ENCODE measurements at regions of chr18 and their contacts with region 1.

Region 1: GRCh38 chr18:24726727-24727492 is 266.5 kb downstream of the HRH4 start:
- DNase-seq: peak; percentile 51
- H3K4me3 ChIP-seq: no peak overlapping the region
- H3K27ac ChIP-seq: no peak overlapping the region
- H3K4me1 ChIP-seq: no peaks in the 10 kb centered on the region
- H3K27me3 ChIP-seq: no peaks in the 10 kb centered on the region
- CTCF ChIP-seq: peak; percentile 55 to 82 (median 72)
- POLR2A ChIP-seq: no peak

Region 2: GRCh38 chr18:24488824-24489493 is 238.0 kb before region 1 on chr18:
- intact Hi-C with region 1: loop called (anchors 10 kb)
- DNase-seq: no peak
- H3K4me3 ChIP-seq: no peak overlapping the region
- H3K27ac ChIP-seq: no peak overlapping the region
- H3K4me1 ChIP-seq: no peaks in the 10 kb centered on the region
- H3K27me3 ChIP-seq: no peaks in the 10 kb centered on the region
- CTCF ChIP-seq: peak; percentile 56 to 85 (median 79)
- POLR2A ChIP-seq: no peak

Region 3: DNA sequence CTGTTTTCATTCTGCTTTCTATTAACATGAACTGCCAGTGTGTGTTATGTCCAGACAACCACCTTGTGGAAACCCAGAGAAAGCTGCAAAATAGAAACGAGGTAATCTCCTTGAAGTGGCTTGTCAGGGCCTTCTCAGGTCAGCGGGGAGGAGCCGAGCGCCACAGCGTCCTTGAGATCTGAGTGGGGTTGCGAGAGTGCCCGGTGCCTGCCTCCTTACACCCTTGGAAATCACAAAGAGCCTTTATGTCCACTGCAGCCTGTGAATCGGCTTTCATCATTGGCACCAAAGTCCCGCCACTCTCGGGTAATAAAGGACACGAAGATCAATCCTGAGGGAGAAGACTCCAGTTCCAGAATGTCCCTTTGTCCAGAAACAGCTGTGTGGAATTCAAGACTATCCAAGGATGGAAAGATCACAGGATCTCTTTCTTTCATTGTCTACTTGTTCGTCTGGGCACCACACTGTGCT is 131.3 kb before region 1 on chr18:
- intact Hi-C with region 1: loop called (anchors 5 kb)
- DNase-seq: no peak
- H3K4me3 ChIP-seq: no peak overlapping the region
- H3K27ac ChIP-seq: no peak overlapping the region
- H3K4me1 ChIP-seq: no peaks in the 10 kb centered on the region
- H3K27me3 ChIP-seq: no peaks in the 10 kb centered on the region
- CTCF ChIP-seq: no peak
- POLR2A ChIP-seq: no peak

Region 4: GRCh38 chr18:24633121-24633520 is 93.8 kb before region 1 on chr18:
- intact Hi-C with region 1: no loop called
- DNase-seq: no peak
- H3K4me3 ChIP-seq: no peak overlapping the region
- H3K27ac ChIP-seq: no peak overlapping the region
- H3K4me1 ChIP-seq: no peaks in the 10 kb centered on the region
- H3K27me3 ChIP-seq: no peaks in the 10 kb centered on the region
- CTCF ChIP-seq: no peak
- POLR2A ChIP-seq: no peak

Region 5: GRCh38 chr18:24778810-24779418 is 52.0 kb after region 1 on chr18:
- intact Hi-C with region 1: no loop called
- DNase-seq: no peak
- H3K4me3 ChIP-seq: no peak overlapping the region
- H3K27ac ChIP-seq: no peak overlapping the region
- H3K4me1 ChIP-seq: no peaks in the 10 kb centered on the region
- H3K27me3 ChIP-seq: no peaks in the 10 kb centered on the region
- CTCF ChIP-seq: no peak
- POLR2A ChIP-seq: no peak

Measured in prostate gland (tissue), 2 donors.